IMR-90 (cell line): ENCODE measurements at regions of chr16 and their contacts with region 1.

Region 1: GRCh38 chr16:74984535-74985296 is at the start of gene WDR59:
- DNase-seq: peak; percentile 99
- ATAC-seq: peak; percentile 100
- H3K4me3 ChIP-seq: peak within 1 kb of the TSS; percentile 91
- H3K27ac ChIP-seq: peak within 1 kb of the TSS; percentile 64
- H3K4me1 ChIP-seq: no peaks in the 10 kb centered on the region
- H3K27me3 ChIP-seq: no peaks in the 10 kb centered on the region
- CTCF ChIP-seq: no peak
- POLR2A ChIP-seq: peak; percentile 82
- RAD21 ChIP-seq: no peak
- total RNA-seq, gene WDR59: 23.9 and 29.4 TPM in 2 replicates

Region 2: GRCh38 chr16:74774203-74775116 is 210.3 kb before region 1 on chr16 and contains the start of gene FA2H:
- CTCF ChIA-PET with region 1: no interaction called
- POLR2A ChIA-PET with region 1: interaction called, 24 read pairs
- dilution Hi-C with region 1: no loop called
- in situ Hi-C with region 1: no loop called
- intact Hi-C with region 1: no loop called
- DNase-seq: peak; percentile 23
- ATAC-seq: peak; percentile 95
- H3K4me3 ChIP-seq: peak within 1 kb of the TSS; percentile 4; the same call in 1 of the 2 replicates
- H3K27ac ChIP-seq: no peak within 1 kb of the TSS
- H3K4me1 ChIP-seq: no peaks in the 10 kb centered on the region; the same call in 1 of the 2 replicates
- H3K27me3 ChIP-seq: peaks cover 54% of the 10 kb centered on the region
- CTCF ChIP-seq: peak; percentile 31; the same call in 1 of the 2 replicates
- POLR2A ChIP-seq: no peak
- RAD21 ChIP-seq: no peak
- total RNA-seq, gene FA2H: not detected in 2 replicates

Region 3: GRCh38 chr16:75497558-75497957 is 512.8 kb after region 1 on chr16:
- CTCF ChIA-PET with region 1: no interaction called
- POLR2A ChIA-PET with region 1: no interaction called
- dilution Hi-C with region 1: no loop called
- in situ Hi-C with region 1: no loop called
- intact Hi-C with region 1: no loop called
- DNase-seq: no peak
- ATAC-seq: no peak
- H3K4me3 ChIP-seq: no peak overlapping the region
- H3K27ac ChIP-seq: no peak overlapping the region
- H3K4me1 ChIP-seq: peaks cover 1% of the 10 kb centered on the region; the same call in 1 of the 2 replicates
- H3K27me3 ChIP-seq: peaks cover 19% of the 10 kb centered on the region
- CTCF ChIP-seq: no peak
- POLR2A ChIP-seq: no peak
- RAD21 ChIP-seq: no peak

Region 4: GRCh38 chr16:76035689-76036088 is 1051.0 kb after region 1 on chr16:
- CTCF ChIA-PET with region 1: no interaction called
- POLR2A ChIA-PET with region 1: no interaction called
- dilution Hi-C with region 1: no loop called
- in situ Hi-C with region 1: no loop called
- intact Hi-C with region 1: no loop called
- DNase-seq: no peak
- ATAC-seq: no peak
- H3K4me3 ChIP-seq: no peak overlapping the region
- H3K27ac ChIP-seq: no peak overlapping the region
- H3K4me1 ChIP-seq: no peaks in the 10 kb centered on the region
- H3K27me3 ChIP-seq: no peaks in the 10 kb centered on the region
- CTCF ChIP-seq: no peak
- POLR2A ChIP-seq: no peak
- RAD21 ChIP-seq: no peak